ENCODE measurements at regions of chr11 and their contacts with region 1.

Region 1: GRCh38 chr11:17528181-17528691 is 16.0 kb downstream of the USH1C start:
- DNase-seq: peak; percentile 28
- ATAC-seq: peak; percentile 98
- H3K4me3 ChIP-seq: no peak overlapping the region
- H3K27ac ChIP-seq: no peak overlapping the region
- H3K4me1 ChIP-seq: no peaks in the 10 kb centered on the region
- H3K27me3 ChIP-seq: peaks cover 13% of the 10 kb centered on the region; the same call in 1 of the 2 replicates
- CTCF ChIP-seq: peak; percentile 67
- POLR2A ChIP-seq: no peak
- RAD21 ChIP-seq: peak; percentile 69

Region 2: DNA sequence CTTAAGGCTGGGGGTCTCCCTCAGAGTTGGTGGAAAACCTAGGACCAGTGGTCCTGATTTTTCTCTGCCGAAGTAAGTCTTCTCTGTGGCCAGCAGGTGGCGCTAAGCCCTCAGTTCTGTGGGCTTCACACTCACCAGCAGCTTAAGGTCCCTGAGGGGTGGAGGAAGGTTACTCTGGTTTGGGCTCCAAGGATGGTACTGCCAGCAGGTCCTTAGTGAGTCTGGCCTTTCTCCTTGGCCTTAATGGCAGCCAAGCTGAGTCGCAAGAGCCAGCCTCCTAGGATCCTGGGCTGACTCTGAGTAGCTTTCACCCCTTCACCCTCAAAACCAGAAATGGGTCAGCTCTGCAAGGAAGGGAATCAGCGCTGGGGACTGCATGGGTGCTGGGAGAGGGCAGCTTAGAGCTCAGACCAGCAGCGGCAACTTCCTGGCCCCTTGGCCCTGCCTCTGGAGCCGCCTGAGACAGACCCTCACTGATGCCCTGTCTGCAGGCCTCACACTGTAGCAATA is 144.2 kb before region 1 on chr11:
- CTCF ChIA-PET with region 1: interaction called, 7 read pairs
- POLR2A ChIA-PET with region 1: no interaction called
- dilution Hi-C with region 1: no loop called
- in situ Hi-C with region 1: no loop called
- intact Hi-C with region 1: loop called (anchors 1 kb)
- DNase-seq: peak; percentile 79
- ATAC-seq: peak; percentile 77
- H3K4me3 ChIP-seq: no peak overlapping the region
- H3K27ac ChIP-seq: no peak overlapping the region
- H3K4me1 ChIP-seq: peaks cover 11% of the 10 kb centered on the region
- H3K27me3 ChIP-seq: peaks cover 3% of the 10 kb centered on the region; the same call in 1 of the 2 replicates
- CTCF ChIP-seq: peak; percentile 80
- POLR2A ChIP-seq: no peak
- RAD21 ChIP-seq: peak; percentile 72

Measured in IMR-90 (cell line).